Activated B cell treated with CpG ODN at 0.5 μM for 24 hours (primary cell): ENCODE measurements at regions of chr20 and their contacts with region 1.

Region 1: GRCh38 chr20:25364180-25364788 is 26.4 kb downstream of the ABHD12 start:
- DNase-seq: no peak
- ATAC-seq: no peak
- H3K4me3 Mint-ChIP-seq: no peak overlapping the region
- H3K27ac Mint-ChIP-seq: no peak overlapping the region
- H3K4me1 Mint-ChIP-seq: peaks cover 12% of the 10 kb centered on the region
- H3K27me3 Mint-ChIP-seq: no peaks in the 10 kb centered on the region
- CTCF ChIP-seq: no peak

Region 2: GRCh38 chr20:25346349-25346748 is 17.9 kb before region 1 on chr20:
- CTCF ChIA-PET with region 1: no interaction called
- POLR2A ChIA-PET with region 1: no interaction called
- intact Hi-C with region 1: no loop called
- DNase-seq: no peak
- ATAC-seq: no peak
- H3K4me3 Mint-ChIP-seq: no peak overlapping the region
- H3K27ac Mint-ChIP-seq: no peak overlapping the region
- H3K4me1 Mint-ChIP-seq: peaks cover 13% of the 10 kb centered on the region
- H3K27me3 Mint-ChIP-seq: no peaks in the 10 kb centered on the region
- CTCF ChIP-seq: no peak

Region 3: DNA sequence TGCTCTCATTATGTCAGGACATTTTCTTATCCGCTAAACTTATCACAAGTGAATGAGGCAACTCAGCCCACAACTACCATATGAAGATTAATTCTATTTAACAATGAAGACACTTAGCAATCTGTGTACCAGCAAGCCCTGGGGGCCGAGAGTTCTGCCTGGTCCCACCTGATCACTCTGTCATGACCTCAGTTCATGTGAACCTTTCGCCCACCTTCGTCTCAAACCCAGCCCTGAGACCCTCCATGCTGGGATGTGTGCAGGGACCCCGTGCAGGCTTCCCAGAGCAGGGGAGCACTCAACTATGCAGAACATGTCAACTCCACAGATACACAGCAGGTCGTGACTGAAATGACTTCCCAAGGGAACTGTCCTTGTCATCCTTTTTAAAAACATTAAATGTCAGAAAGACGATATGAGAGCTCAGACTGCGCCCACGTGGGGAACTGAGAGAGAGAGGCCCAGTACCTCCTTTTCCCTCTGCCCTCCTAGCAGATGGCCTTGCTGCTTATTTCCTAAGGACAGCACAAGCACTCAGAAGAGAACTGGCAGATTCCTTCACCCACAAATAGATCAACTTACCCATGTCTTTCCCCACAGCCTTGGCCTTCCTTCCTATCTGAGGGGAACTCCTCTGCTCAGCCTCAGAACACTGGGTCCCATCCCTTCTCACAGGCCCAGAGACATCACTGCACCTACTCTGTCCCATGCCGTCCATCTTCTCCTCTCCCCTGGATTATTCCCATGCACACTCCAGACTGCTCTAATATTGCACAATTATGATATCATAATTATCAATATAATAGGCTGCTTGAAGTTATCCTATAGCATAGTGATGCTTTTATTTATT is 14.8 kb after region 1 on chr20:
- CTCF ChIA-PET with region 1: no interaction called
- POLR2A ChIA-PET with region 1: no interaction called
- intact Hi-C with region 1: loop called (anchors 2 kb)
- DNase-seq: no peak
- ATAC-seq: no peak
- H3K4me3 Mint-ChIP-seq: no peak overlapping the region
- H3K27ac Mint-ChIP-seq: no peak overlapping the region
- H3K4me1 Mint-ChIP-seq: peaks cover 8% of the 10 kb centered on the region
- H3K27me3 Mint-ChIP-seq: no peaks in the 10 kb centered on the region
- CTCF ChIP-seq: no peak